Esophagus muscularis mucosa (tissue), 4 donors: ENCODE measurements at regions of chr12 and their contacts with region 1.

Region 1: GRCh38 chr12:810671-811415 is 58.5 kb downstream of the WNK1 start:
- DNase-seq: no peak
- H3K4me3 ChIP-seq: no peak overlapping the region
- H3K27ac ChIP-seq: no peak overlapping the region
- H3K4me1 ChIP-seq: peaks cover 26 to 47% (median 45%) of the 10 kb centered on the region in 4 donors
- H3K27me3 ChIP-seq: no peaks in the 10 kb centered on the region
- CTCF ChIP-seq: no peak
- EP300 ChIP-seq: no peak
- POLR2A ChIP-seq: no peak

Region 2: GRCh38 chr12:569803-570434 is 240.9 kb before region 1 on chr12:
- intact Hi-C with region 1: loop called (anchors 1 kb)
- DNase-seq: peak; percentile 96
- H3K4me3 ChIP-seq: peak overlapping the region; percentile 61 to 78 (median 68)
- H3K27ac ChIP-seq: peak overlapping the region; percentile 89 to 96 (median 96)
- H3K4me1 ChIP-seq: peaks cover 31 to 37% (median 36%) of the 10 kb centered on the region in 4 donors
- H3K27me3 ChIP-seq: no peaks in the 10 kb centered on the region
- CTCF ChIP-seq: peak; percentile 92 to 97 (median 96)
- EP300 ChIP-seq: no peak
- POLR2A ChIP-seq: no peak

Region 3: DNA sequence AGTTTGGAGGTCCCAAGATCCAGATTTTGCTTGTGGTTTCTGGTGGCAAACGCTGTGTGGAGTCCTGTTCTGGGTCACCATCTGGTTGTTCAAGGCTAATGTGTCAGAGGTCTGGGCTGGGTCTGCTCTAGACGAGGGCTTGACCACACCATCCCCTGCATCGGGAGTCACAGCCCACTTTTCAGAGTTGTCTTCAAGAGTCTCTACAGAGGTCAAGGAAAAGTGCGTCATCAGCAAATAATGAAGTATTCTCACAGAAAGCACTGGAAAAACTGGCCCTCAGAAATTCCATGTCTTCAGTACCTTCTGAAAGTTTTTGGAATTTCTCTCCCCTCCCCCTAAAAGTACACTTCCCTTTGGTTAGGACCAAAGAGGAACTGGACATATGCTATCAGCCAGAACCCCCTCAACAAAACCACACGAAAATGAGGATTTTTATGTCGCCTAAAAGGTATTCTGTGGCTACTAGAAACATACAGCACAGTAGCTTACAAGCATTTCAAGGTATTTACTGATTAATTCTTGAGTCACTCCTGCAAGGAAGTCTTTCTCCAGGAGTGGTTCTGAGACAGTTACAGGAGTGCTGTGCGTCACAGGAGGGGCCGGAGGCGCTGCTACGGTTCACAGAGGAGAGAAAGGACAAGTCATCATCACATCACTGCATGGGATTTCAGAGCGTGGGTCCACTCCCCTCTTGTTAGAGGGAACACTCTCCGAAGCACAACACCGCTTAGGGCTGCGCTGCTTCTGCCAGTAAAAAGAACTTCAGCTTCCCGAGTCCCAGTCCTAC is 103.3 kb after region 1 on chr12:
- intact Hi-C with region 1: no loop called
- DNase-seq: no peak
- H3K4me3 ChIP-seq: no peak overlapping the region
- H3K27ac ChIP-seq: no peak overlapping the region
- H3K4me1 ChIP-seq: peaks cover 0 to 22% (median 5%) of the 10 kb centered on the region in 4 donors
- H3K27me3 ChIP-seq: no peaks in the 10 kb centered on the region
- CTCF ChIP-seq: no peak
- EP300 ChIP-seq: no peak
- POLR2A ChIP-seq: no peak

Region 4: DNA sequence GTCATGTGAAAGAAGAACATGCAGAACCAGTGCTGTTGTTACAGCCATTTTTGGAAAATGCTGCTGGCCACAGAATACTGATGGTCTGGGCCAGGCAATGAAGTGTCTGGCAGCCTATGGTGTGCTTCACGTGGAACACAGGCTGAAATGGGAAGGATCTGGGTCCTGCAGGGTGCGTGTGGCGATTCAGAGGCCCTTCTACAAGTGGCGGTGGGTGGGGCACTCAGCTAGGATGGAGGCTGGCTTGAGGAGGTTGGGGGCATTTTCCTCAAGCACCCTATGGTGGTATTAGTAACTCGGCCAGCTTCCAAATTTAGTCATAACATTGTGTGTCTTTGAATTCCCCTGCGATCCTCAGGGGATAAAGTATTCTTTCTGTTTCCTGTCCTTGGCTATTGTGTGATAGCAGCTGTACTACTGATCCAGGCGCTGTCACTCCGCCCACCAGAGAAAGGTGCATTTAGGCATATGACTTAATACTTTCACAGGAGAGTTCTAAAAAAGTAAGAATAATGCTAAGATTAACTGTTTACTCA is 147.8 kb after region 1 on chr12:
- intact Hi-C with region 1: no loop called
- DNase-seq: no peak
- H3K4me3 ChIP-seq: no peak overlapping the region
- H3K27ac ChIP-seq: no peak overlapping the region
- H3K4me1 ChIP-seq: peaks cover 0 to 13% (median 7%) of the 10 kb centered on the region in 4 donors
- H3K27me3 ChIP-seq: no peaks in the 10 kb centered on the region
- CTCF ChIP-seq: no peak
- EP300 ChIP-seq: no peak
- POLR2A ChIP-seq: no peak